Right ventricle myocardium inferior (tissue), 1 donor: ENCODE measurements at regions of chr13 and their contacts with region 1.

Region 1: DNA sequence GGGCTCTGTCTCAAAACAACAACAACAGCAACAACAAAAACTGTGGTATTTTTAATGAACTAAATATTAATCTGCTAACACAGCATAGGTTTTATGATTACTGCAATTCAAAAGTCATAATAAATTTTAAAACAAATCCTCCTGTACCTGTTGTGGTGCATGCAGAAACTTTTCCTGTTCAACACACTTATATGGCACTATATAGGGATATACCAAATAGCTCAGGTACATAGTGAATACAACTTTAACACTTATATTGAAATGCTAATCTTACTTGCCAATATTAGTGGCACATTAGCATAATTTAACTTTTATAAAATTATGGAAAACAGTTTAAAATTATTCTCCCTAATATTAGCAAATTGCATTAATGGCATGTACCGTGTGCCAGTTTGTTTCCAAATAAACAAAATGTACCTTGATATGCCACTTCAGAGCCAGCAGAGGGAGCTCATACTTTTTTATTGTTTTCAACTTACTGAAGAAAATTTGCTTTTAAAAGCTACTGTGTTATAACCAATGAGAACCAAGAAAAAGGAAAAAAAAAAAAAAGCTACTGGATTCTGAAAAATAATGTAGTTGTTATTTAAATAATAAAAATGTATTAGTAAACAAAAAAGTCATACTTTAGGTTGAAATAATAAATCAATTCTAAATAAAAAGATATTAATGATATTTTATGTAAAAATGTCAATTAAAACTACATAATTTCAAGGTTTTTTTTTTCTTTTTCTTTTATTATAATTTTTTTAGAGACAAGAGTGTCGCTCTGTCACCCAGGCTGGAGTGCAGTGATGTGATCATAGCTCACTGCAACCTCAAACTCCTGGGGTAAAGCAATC is 18.0 kb upstream of the RBM26 start:
- DNase-seq: no peak
- ATAC-seq: no peak

Region 2: DNA sequence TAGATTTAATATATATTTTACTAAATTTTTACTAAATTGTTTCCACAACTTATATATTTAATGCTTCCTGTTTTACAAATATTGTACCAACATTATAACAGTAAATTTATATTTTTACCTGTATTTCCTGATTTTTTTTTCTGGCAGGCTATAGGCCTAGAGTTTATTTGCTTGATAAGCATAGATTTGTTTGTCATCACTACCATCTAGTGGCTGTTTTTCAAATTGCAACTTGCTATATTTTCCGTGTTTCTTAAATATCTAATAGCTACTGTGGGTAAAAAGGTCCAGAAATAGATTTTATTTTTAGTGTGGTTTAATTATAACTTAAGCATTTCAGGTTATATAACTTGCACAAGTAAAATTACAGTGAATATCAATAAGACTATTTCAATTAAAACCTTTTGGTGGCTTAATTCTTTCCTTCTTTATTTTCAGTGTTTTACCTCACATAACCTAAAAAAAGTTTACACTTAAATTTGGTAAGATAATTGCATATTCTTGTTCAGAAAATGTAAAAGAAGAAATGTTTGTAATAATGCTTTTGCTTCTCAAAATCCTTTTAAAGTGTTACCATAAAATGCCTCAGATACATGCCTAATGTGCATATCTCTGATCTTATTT is 117.5 kb after region 1 on chr13:
- intact Hi-C with region 1: loop called (anchors 1 kb)
- DNase-seq: no peak
- ATAC-seq: no peak

Region 3: GRCh38 chr13:81017513-81018152 is 1593.6 kb after region 1 on chr13:
- intact Hi-C with region 1: loop called (anchors 10 kb)
- DNase-seq: no peak
- ATAC-seq: no peak